Breast epithelium (tissue), 4 donors: ENCODE measurements at regions of chr2 and their contacts with region 1.

Region 1: DNA sequence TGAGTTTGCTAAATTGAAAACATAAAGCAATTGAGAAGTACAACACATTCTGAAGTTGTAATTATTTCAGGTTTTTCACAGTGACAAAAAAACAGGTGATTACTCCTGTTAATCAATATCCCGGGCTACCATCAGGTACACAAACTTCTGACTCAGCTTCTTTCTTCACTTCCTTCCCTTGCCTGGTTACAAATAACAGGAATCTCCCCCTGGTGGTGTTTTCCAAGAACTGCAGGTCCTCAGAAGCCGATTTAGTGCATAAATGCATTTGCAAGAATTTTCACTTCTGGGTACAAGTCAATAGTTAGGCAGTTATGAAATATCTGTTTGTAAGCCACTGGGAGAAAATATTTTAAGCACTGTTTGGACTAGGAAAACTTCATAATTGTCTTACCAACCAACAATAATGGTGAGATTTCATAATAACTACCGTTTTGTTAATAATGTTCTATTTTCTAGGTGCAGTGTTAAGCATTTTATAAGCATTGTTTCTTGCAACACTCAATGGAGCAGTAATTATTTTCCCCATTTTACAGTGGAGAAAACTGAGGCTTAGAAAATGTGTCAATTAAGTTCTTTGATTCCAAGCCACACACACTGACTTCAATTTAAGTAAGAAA is 12.4 kb upstream of the GMCL1 start:
- DNase-seq: peak; percentile 60 to 73
- H3K4me3 ChIP-seq: no peak overlapping the region
- H3K27ac ChIP-seq: no peak overlapping the region
- H3K4me1 ChIP-seq: no peaks in the 10 kb centered on the region
- H3K27me3 ChIP-seq: no peaks in the 10 kb centered on the region
- CTCF ChIP-seq: peak; percentile 98 to 99 (median 98)
- POLR2A ChIP-seq: no peak

Region 2: DNA sequence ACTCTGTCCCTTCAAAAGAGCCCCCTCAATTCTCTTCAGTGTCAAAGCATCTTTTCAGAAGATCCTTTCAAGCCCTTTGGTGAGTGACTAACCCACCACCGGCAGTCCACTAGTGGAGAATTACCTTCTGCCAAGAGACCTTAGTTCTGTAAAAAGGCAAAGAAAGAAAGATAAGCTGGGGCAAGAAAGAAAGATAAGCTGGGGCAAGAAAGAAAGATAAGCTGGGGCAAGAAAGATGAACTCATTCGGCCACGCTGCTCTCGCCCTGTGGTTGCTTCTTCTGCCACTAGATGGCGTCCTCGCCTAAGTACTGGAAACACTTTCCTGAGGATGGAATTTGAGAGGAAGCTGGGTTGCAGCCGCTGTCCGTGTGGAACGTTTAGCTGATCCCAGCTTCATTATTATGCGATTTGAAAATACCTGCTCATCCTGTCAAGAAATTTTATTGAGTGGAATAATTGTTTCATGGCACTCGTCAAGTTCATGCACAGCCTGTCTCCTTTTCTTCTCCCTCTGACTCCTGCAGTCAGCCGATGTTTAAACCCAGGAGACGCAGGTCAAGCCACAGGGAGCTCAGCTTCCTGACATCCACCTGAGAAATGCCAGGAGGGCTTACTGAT is 92.4 kb before region 1 on chr2:
- intact Hi-C with region 1: loop called (anchors 1 kb)
- DNase-seq: peak; percentile 77 to 83
- H3K4me3 ChIP-seq: peak overlapping the region; percentile 10 to 58 (median 17)
- H3K27ac ChIP-seq: no peak overlapping the region
- H3K4me1 ChIP-seq: no peaks in the 10 kb centered on the region
- H3K27me3 ChIP-seq: no peaks in the 10 kb centered on the region
- CTCF ChIP-seq: peak; percentile 93 to 95 (median 94)
- POLR2A ChIP-seq: no peak